Posterior cingulate gyrus (tissue), 11 donors: ENCODE measurements at regions of chr18 and their contacts with region 1.

Region 1: DNA sequence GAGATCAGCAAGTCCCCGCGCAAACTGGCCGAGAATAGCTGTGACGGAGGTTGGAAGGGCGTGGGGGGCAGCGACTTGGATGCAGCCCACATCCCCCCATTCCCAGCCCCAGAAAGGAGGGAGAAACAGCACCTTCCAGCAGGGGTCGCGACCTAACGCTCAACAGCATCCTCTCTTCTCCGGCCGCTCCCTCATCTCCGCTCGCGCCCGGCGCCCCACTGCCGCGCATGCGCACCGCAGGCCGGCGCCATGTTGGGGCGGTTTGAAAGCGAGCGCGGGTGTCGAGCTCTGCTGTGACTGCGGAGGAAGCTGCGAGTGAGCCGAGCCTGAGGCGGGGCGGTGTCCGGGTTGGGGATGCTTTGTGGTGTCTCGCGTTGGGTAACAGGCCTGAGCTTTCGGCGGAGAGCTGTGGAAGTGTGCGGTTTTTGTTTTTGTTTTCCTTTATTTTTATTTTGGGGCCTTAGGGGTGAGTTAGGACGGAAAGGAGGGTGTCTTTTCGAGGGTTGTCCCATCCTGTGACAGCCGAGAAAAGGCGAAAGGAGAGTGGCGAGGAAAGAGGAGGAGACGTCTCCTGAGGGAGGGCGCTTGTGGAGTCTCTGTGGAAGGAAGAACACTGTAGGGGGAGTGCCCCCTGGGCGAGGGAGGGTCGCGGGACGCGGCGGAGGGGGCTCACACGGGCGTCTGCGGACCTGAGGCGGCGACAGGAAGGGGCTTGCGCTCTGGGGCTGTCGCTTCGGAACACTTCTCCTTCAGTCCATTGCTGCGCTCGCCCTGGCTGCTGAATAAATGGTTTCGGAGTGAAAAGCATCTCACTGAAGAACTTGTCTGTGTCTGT is at the starts of genes C18orf54 and STARD6:
- DNase-seq: peak; percentile 76 to 97 (median 83)

Region 2: DNA sequence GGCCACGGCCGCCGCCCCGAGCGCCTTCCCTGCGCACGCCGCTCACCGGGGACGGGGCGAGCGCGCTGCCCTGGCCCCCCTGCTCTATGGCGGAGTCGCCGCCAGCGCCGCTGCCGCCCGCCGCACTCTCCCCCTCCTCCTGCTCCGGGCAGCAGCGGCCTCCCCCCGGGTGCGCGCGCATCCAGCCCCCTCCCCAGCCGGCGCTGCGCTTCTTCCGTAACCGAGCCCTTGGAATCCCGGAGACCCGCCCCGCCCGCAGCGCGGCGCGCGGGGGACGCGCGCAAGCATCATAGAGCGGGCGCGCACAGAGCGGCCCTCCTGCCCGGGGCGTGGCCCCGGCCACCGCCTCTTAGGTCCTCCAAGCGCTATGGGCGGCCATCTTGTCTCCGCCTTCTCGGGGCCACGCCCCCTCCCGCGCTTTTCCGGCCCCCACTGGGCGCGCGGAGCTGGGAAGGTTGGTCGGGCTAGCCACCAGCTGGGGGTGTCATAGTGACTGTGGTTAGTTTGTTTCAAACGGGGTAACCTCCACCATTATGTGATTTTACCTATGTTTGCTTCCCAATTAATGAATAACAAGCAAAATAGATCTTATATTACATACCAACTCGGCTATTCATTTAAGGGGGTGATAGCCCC is 133.4 kb before region 1 on chr18 and contains the start of gene MBD2:
- intact Hi-C with region 1: loop called (anchors 1 kb)
- DNase-seq: peak; percentile 87 to 99 (median 94)